Activated CD4-positive, alpha-beta memory T cell treated with anti-CD3 and anti-CD28 coated beads, Interleukin-2, amount 10 ng/mL, durations not matched to agents 7 days and 5 days (primary cell): ENCODE measurements at regions of chr10 and their contacts with region 1.

Region 1: GRCh38 chr10:22988581-22989360 is 60.9 kb downstream of the ARMC3 start:
- DNase-seq: peak; percentile 70
- H3K4me3 Mint-ChIP-seq: no peak overlapping the region
- H3K27ac Mint-ChIP-seq: no peak overlapping the region
- H3K4me1 Mint-ChIP-seq: peaks cover 20% of the 10 kb centered on the region
- H3K27me3 Mint-ChIP-seq: peaks cover 9% of the 10 kb centered on the region

Region 2: GRCh38 chr10:21993360-21994001 is 995.3 kb before region 1 on chr10:
- CTCF ChIA-PET with region 1: interaction called, 13 read pairs
- POLR2A ChIA-PET with region 1: interaction called, 3 read pairs
- DNase-seq: no peak
- H3K4me3 Mint-ChIP-seq: no peak overlapping the region
- H3K27ac Mint-ChIP-seq: no peak overlapping the region
- H3K4me1 Mint-ChIP-seq: peaks cover 13% of the 10 kb centered on the region
- H3K27me3 Mint-ChIP-seq: no peaks in the 10 kb centered on the region

Region 3: DNA sequence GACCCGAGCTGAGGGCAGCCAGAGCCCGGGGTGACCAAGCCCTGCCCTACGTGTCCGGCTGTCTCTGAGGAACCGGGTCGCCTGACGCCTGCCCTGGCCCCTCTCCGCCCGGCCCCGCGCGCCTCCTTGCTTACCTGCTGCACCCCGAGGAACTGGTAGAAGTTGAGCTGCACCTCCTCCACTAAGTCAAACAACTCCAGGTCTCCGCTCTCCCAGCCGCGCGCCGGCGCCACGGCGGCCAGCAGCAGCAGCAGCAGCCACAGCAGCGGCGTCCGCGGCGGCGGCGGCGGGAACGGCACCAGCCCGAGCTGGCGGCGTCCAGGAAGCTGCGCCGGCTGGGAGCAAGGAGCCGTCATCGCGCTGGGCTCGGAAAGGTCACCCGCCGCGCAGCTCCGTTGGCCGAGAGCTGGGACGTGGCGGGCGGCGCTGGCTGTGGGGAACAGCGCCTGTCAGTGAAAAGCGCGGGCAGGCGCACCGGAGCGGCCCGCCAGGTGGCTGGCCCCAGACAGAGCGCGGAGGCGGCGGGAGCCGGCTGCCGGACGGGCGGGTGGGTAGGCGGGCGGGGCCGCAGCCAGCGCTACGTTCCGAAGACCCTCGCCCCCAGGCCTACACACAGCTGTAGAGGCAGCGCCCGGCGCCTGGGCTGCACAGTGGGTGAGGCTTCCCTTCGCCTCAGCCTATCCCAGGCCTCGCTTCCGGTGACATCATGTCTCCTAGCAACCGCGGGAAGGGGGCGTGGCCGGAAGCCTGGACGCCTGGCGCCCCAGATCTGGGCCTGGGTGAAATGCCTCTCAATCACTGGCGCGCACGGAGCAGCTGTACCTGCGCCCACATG is 985.5 kb before region 1 on chr10 and contains the start of gene DNAJC1:
- CTCF ChIA-PET with region 1: interaction called, 10 read pairs
- POLR2A ChIA-PET with region 1: no interaction called
- DNase-seq: peak; percentile 98
- H3K4me3 Mint-ChIP-seq: peak within 1 kb of the TSS; percentile 96
- H3K27ac Mint-ChIP-seq: peak within 1 kb of the TSS; percentile 93
- H3K4me1 Mint-ChIP-seq: peaks cover 30% of the 10 kb centered on the region
- H3K27me3 Mint-ChIP-seq: peaks cover 9% of the 10 kb centered on the region
- total RNA-seq, gene DNAJC1: 35.7 to 38.9 TPM